Adrenal gland (tissue), 19 donors: ENCODE measurements at regions of chr4 and their contacts with region 1.

Region 1: GRCh38 chr4:41287050-41287449 is 30.3 kb downstream of the UCHL1 start:
- DNase-seq: no peak
- H3K4me3 ChIP-seq: no peak overlapping the region
- H3K27ac ChIP-seq: no peak overlapping the region
- H3K4me1 ChIP-seq: no peaks in the 10 kb centered on the region
- H3K27me3 ChIP-seq: no peaks in the 10 kb centered on the region
- CTCF ChIP-seq: no peak
- POLR2A ChIP-seq: no peak

Region 2: DNA sequence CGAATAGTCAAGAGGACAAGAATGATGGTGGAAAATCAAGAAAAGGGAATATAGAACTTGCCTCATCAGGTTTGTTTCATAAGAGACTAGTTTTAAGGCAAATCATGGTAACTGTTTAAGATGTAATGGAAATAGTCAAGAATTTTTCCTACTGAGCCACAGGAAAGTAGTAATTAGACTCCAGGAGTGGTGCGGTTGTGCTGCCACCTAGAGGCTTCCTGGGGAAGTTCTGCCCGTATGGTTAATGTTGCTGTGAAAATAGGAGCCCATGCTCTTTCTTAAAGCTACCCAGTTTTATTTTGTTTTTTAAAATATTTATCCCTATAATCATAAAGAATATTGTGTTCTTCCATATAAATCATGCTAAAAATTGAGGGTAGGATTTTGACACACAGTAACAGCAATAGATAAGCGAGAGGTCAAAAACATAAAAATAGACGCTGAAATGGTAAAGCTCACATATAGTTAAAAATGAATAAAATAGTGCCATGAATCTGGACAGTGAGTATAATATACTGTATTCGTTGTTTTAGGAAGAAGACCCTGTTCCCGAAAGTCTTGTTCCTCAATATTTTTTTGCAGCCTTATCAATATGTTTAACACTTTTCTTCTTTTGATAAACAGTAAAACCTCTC is 374.5 kb after region 1 on chr4:
- intact Hi-C with region 1: loop called in 1 of 2 experiments (anchors 5 kb)
- DNase-seq: peak; percentile 46 to 88 (median 65)
- H3K4me3 ChIP-seq: no peak overlapping the region
- H3K27ac ChIP-seq: peak overlapping the region in 1 of 5 donors; percentile 45
- H3K4me1 ChIP-seq: no peaks in the 10 kb centered on the region
- H3K27me3 ChIP-seq: no peaks in the 10 kb centered on the region
- CTCF ChIP-seq: peak; percentile 84 to 99 (median 91)
- POLR2A ChIP-seq: no peak